Dorsolateral prefrontal cortex (tissue), 120 donors: ENCODE measurements at regions of chr13 and their contacts with region 1.

Region 1: GRCh38 chr13:102773441-102774215 is at the start of gene TEX30:
- DNase-seq: peak; percentile 53 to 93 (median 73)
- H3K4me3 ChIP-seq: peak within 1 kb of the TSS; percentile 59 to 97 (median 86)
- H3K27ac ChIP-seq: peak within 1 kb of the TSS in 57 of 59 donors; percentile 9 to 91 (median 80)
- H3K27me3 ChIP-seq: no peaks in the 10 kb centered on the region
- CTCF ChIP-seq: peak in 43 of 56 donors; percentile 6 to 60 (median 35)
- total RNA-seq, gene TEX30: 3.7 to 14.8 (median 8.6) TPM

Region 2: GRCh38 chr13:101013245-101013644 is 1760.4 kb before region 1 on chr13:
- intact Hi-C with region 1: no loop called
- DNase-seq: no peak
- H3K4me3 ChIP-seq: no peak overlapping the region
- H3K27ac ChIP-seq: peak overlapping the region in 15 of 59 donors; percentile 16 to 87 (median 65)
- H3K27me3 ChIP-seq: peaks cover 0 to 7% (median 0%) of the 10 kb centered on the region in 45 donors
- CTCF ChIP-seq: no peak

Region 3: DNA sequence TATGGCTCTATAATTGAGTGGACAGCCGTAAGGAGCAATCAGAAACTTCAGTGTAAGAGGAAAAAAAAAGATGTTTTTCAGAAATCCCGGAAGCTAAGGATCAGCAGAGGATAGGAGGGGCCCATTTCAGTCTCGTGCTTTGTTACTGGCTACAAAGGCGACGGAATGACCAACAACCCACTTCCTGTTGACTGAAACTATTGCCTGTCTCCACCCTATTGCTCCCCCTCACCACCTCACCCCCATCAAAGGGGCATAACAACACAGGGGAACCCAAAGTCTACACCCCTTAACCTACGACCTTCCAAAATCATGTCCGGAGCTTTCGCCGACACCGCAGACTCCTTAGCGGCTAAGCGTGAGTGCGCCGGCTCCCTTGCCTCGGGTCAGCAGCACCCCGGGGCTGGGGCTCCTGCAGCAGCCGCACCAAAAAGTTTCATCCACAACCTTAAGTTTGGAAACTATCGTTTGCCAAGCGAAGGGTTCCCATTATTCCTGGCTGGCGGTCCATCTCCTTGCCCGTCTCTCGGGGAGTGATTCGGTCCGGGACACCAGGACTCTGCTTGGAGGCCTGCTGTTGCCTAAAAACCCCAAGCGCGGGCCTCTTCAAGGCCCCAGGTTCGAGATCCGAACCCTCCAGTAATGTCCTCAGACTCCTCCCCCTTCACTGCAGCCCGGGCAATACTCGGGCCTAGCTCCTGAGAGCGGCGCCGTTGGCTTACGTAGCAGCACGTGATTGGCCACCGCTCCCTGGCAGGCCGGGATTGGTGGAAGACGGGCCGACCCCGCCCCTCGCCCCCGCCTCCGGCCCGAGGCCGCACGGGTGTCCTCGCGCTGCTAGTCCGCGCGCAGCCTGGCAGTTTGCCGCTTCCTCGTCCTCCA is 177.2 kb before region 1 on chr13 and contains the start of gene TPP2:
- intact Hi-C with region 1: loop called (anchors 2 to 10 kb)
- DNase-seq: peak; percentile 98 to 99 (median 99)
- H3K4me3 ChIP-seq: peak within 1 kb of the TSS; percentile 74 to 100 (median 95)
- H3K27ac ChIP-seq: peak within 1 kb of the TSS; percentile 87 to 99 (median 97)
- H3K27me3 ChIP-seq: no peaks in the 10 kb centered on the region
- CTCF ChIP-seq: peak in 16 of 56 donors; percentile 2 to 51 (median 30)
- total RNA-seq, gene TPP2: 21.8 to 51.2 (median 39.7) TPM

Region 4: GRCh38 chr13:102742101-102742500 is 31.5 kb before region 1 on chr13:
- intact Hi-C with region 1: no loop called
- DNase-seq: no peak
- H3K4me3 ChIP-seq: no peak overlapping the region
- H3K27ac ChIP-seq: peak overlapping the region in 22 of 59 donors; percentile 1 to 67 (median 40)
- H3K27me3 ChIP-seq: peaks cover 0 to 28% (median 0%) of the 10 kb centered on the region in 45 donors
- CTCF ChIP-seq: no peak

Region 5: GRCh38 chr13:102758842-102759241 is 14.8 kb before region 1 on chr13:
- intact Hi-C with region 1: no loop called
- DNase-seq: no peak
- H3K4me3 ChIP-seq: no peak overlapping the region
- H3K27ac ChIP-seq: no peak overlapping the region
- H3K27me3 ChIP-seq: no peaks in the 10 kb centered on the region
- CTCF ChIP-seq: no peak

Region 6: DNA sequence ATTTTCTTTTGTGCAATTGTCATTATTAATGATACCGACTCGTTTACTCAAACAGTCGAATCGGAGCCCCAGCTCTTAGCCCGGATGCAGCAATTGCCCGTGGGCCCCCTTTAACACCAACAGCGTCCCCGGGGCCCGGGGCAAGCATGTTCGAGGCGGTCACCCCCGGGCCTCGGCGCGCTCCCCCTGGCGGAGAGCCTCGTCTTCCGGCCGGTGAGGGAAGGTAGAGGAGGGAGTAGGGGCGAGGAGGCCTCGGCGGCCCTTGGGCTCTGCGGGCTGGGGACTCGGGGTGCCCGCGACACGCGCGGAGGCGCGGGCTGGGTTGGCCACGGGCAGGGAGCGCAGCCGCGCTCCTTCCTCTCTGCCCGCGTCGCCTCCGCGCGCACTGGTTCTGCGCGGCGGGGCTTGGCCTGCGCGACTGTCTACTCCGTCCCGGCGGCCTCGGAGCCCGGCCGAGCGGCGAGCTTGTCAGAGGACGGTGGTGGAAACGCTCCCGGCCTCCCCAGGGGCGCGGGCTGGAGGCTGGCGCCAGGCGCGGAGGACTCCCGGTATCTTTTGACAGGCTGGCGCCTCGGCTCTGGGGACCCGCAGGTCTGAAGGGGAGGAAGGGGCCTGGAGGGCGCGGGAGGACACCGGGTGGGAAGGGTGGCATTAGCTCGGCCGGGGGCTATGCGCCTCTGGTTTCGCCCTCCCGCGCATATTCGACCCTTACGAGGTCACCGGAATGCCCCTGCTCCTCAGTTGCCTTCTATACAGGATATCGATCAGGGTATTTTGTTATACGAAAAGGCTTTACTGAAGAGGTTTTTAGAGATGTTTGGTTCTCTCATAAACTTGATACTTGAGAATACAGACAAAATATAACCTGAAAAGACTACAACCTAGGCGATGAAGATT is 26.8 kb after region 1 on chr13:
- intact Hi-C with region 1: loop called in 1 of 2 experiments (anchors 2 kb)
- DNase-seq: peak; percentile 57 to 83 (median 68)
- H3K4me3 ChIP-seq: peak overlapping the region; percentile 66 to 100 (median 90)
- H3K27ac ChIP-seq: peak overlapping the region; percentile 29 to 92 (median 83)
- H3K27me3 ChIP-seq: no peaks in the 10 kb centered on the region
- CTCF ChIP-seq: peak; percentile 38 to 85 (median 66)

Region 7: DNA sequence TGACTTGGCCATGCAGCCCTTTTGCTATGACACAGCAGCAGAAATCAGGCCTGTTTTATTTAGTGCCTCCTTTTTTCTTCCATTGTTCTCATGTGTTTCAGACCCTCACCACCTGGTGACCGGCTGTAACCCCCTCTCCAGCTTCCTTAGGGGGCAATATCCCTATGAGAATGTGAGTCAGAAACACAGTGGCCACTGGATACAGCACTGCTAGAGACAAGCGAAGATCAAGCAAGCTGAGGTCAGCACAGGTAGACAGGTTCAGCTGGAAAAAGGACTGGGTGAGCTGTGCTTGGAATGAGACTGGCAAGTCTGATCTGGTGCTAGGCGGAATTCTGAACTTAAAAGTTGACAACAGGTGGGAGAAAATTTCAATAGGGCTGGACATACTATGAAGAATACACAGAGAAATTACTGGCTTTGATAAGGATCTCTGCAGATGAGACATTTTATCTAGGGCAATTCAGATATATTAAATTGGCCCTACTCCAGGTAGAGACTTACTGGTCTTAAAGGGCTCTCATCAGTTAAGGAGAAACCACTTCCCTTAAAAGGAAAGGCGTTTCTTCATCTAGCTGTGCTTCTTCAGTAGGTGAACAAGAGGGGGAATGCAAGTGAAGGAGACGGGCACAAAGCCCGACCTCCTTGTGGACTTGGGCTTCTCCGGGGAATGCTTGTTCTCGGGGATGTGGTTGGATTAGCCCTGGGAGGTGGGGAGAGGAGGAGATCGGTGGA is 155.5 kb after region 1 on chr13:
- intact Hi-C with region 1: no loop called
- DNase-seq: no peak
- H3K4me3 ChIP-seq: no peak overlapping the region
- H3K27ac ChIP-seq: no peak overlapping the region
- H3K27me3 ChIP-seq: no peaks in the 10 kb centered on the region
- CTCF ChIP-seq: no peak